ENCODE measurements at regions of chr12 and their contacts with region 1.

Region 1: GRCh38 chr12:65986047-65986446 is 144.5 kb downstream of the LLPH start:
- DNase-seq: no peak
- ATAC-seq: no peak
- H3K4me3 ChIP-seq: no peak overlapping the region
- H3K27ac ChIP-seq: no peak overlapping the region
- H3K4me1 ChIP-seq: peaks cover 16% of the 10 kb centered on the region
- H3K27me3 ChIP-seq: no peaks in the 10 kb centered on the region
- CTCF ChIP-seq: peak; percentile 33
- EP300 ChIP-seq: no peak
- POLR2A ChIP-seq: no peak
- RAD21 ChIP-seq: no peak

Region 2: GRCh38 chr12:65306366-65307168 is 679.5 kb before region 1 on chr12:
- CTCF ChIA-PET with region 1: no interaction called
- POLR2A ChIA-PET with region 1: no interaction called
- in situ Hi-C with region 1: no loop called
- intact Hi-C with region 1: loop called (anchors 1 kb)
- DNase-seq: peak; percentile 37
- ATAC-seq: peak; percentile 66
- H3K4me3 ChIP-seq: no peak overlapping the region
- H3K27ac ChIP-seq: no peak overlapping the region
- H3K4me1 ChIP-seq: peaks cover 6% of the 10 kb centered on the region; the same call in 1 of the 2 replicates
- H3K27me3 ChIP-seq: no peaks in the 10 kb centered on the region
- CTCF ChIP-seq: peak; percentile 75
- EP300 ChIP-seq: no peak
- POLR2A ChIP-seq: no peak
- RAD21 ChIP-seq: peak; percentile 66

Region 3: DNA sequence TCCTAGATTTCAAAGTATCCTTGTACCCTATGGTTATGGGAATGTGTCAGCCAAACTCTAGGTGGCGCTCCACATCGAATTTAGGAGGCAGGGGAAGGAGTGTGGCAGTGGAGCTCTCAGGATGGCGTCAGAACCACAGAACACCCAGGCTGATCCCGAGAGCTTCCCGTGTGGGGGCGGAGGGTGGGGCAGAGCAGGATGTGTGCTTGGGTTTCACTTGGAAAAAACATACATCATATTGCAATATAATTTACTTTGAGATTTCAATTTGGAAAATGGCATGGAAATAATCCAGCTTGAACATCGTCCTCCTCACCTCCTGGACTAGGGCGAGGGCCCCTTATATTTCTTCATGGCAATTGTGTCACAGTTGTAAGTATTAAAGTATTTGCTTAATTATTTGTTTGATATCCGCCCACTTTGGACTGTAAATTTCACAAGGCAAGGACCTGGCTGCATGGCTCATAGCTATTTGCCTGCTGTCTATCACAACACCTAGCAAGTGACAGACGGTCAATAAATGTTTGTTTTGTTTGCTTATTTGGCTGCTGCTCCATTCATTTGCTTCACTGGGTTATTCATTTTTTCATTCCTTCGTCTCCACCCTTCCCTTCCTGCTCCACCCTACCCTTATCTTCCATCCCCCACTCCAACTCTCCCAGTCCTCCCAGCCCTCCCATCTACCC is 383.3 kb before region 1 on chr12:
- CTCF ChIA-PET with region 1: interaction called, 3 read pairs
- POLR2A ChIA-PET with region 1: no interaction called
- in situ Hi-C with region 1: loop called (anchors 10 kb)
- intact Hi-C with region 1: loop called (anchors 1 kb)
- DNase-seq: peak; percentile 62
- ATAC-seq: peak; percentile 99
- H3K4me3 ChIP-seq: peak overlapping the region in 1 of 3 experiments; percentile 28; a peak in 1 of 6 replicates
- H3K27ac ChIP-seq: no peak overlapping the region
- H3K4me1 ChIP-seq: peaks cover 19% of the 10 kb centered on the region
- H3K27me3 ChIP-seq: no peaks in the 10 kb centered on the region
- CTCF ChIP-seq: peak; percentile 79
- EP300 ChIP-seq: no peak
- POLR2A ChIP-seq: no peak
- RAD21 ChIP-seq: no peak

Region 4: GRCh38 chr12:65895759-65896656 is 90.0 kb before region 1 on chr12:
- CTCF ChIA-PET with region 1: no interaction called
- POLR2A ChIA-PET with region 1: no interaction called
- in situ Hi-C with region 1: no loop called
- intact Hi-C with region 1: loop called (anchors 5 kb)
- DNase-seq: peak; percentile 97
- ATAC-seq: peak; percentile 96
- H3K4me3 ChIP-seq: peak overlapping the region; percentile 15 to 60 (median 53); a peak in 5 of 6 replicates
- H3K27ac ChIP-seq: peak overlapping the region; percentile 92
- H3K4me1 ChIP-seq: peaks cover 91% of the 10 kb centered on the region
- H3K27me3 ChIP-seq: no peaks in the 10 kb centered on the region
- CTCF ChIP-seq: no peak
- EP300 ChIP-seq: no peak; a peak in 1 of 4 replicates
- POLR2A ChIP-seq: peak; percentile 56 to 63; a peak in 3 of 4 replicates
- RAD21 ChIP-seq: no peak

Region 5: GRCh38 chr12:66087365-66087943 is 101.4 kb after region 1 on chr12:
- CTCF ChIA-PET with region 1: interaction called, 10 read pairs
- POLR2A ChIA-PET with region 1: no interaction called
- in situ Hi-C with region 1: loop called (anchors 25 kb)
- intact Hi-C with region 1: loop called (anchors 1 kb)
- DNase-seq: peak; percentile 57
- ATAC-seq: peak; percentile 72
- H3K4me3 ChIP-seq: no peak overlapping the region
- H3K27ac ChIP-seq: no peak overlapping the region
- H3K4me1 ChIP-seq: peaks cover 27% of the 10 kb centered on the region
- H3K27me3 ChIP-seq: no peaks in the 10 kb centered on the region
- CTCF ChIP-seq: peak; percentile 83
- EP300 ChIP-seq: no peak
- POLR2A ChIP-seq: no peak
- RAD21 ChIP-seq: peak; percentile 77

Region 6: DNA sequence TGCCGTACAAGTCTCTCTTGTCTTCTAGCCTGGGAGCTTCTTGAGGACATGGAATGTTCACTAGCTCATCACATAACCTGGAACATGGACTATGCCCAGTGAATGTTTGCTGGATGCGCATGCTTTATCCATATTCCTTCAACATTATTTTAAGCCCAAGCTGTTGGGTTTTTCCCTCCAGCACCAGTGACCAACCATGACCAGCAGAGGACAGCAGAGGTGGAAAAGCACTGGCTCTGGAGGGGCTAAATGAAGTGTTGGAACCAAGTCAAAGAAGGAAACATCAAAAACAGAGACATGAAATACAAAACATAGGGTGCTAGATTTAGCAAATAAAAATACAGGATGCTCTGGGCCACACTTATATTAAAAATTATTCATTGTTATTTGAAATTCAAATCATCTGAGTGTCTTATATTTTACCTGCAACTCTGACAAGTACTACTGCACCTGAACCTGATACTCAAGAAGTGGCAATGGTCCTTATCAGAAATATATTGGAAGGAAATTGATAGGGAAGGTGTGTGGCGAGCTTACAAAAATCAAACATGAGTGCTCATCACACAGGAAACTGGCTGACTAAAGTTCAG is 293.2 kb after region 1 on chr12:
- CTCF ChIA-PET with region 1: no interaction called
- POLR2A ChIA-PET with region 1: no interaction called
- in situ Hi-C with region 1: no loop called
- intact Hi-C with region 1: no loop called
- DNase-seq: peak; percentile 27
- ATAC-seq: peak; percentile 85
- H3K4me3 ChIP-seq: no peak overlapping the region
- H3K27ac ChIP-seq: no peak overlapping the region
- H3K4me1 ChIP-seq: no peaks in the 10 kb centered on the region
- H3K27me3 ChIP-seq: peaks cover 0 to 3% of the 10 kb centered on the region in 2 experiments; a peak in 1 of 5 replicates
- CTCF ChIP-seq: peak; percentile 63
- EP300 ChIP-seq: no peak
- POLR2A ChIP-seq: no peak
- RAD21 ChIP-seq: no peak

Measured in HepG2 (cell line).